CD4-positive, alpha-beta T cell (primary cell): ENCODE measurements at regions of chr17 and their contacts with region 1.

Region 1: GRCh38 chr17:16438557-16439302 is 23.4 kb downstream of the TRPV2 start:
- DNase-seq: peak; percentile 86 to 99 (median 92)
- ATAC-seq: peak; percentile 81
- H3K4me3 ChIP-seq: peak overlapping the region; percentile 96
- H3K4me3 Mint-ChIP-seq: peak overlapping the region; percentile 100
- H3K27ac ChIP-seq: peak overlapping the region; percentile 81 to 91
- H3K27ac Mint-ChIP-seq: peak overlapping the region; percentile 96
- H3K4me1 ChIP-seq: peaks cover 55% of the 10 kb centered on the region
- H3K4me1 Mint-ChIP-seq: peaks cover 56% of the 10 kb centered on the region
- H3K27me3 ChIP-seq: no peaks in the 10 kb centered on the region
- H3K27me3 Mint-ChIP-seq: no peaks in the 10 kb centered on the region
- CTCF ChIP-seq: no peak

Region 2: GRCh38 chr17:16215273-16215964 is 223.3 kb before region 1 on chr17 and contains the start of gene NCOR1:
- CTCF ChIA-PET with region 1: no interaction called
- POLR2A ChIA-PET with region 1: interaction called, 3 read pairs
- intact Hi-C with region 1: loop called in 1 of 2 experiments (anchors 5 kb)
- DNase-seq: peak; percentile 79 to 95 (median 87)
- ATAC-seq: peak; percentile 87
- H3K4me3 ChIP-seq: peak within 1 kb of the TSS; percentile 73
- H3K4me3 Mint-ChIP-seq: peak within 1 kb of the TSS; percentile 100
- H3K27ac ChIP-seq: peak within 1 kb of the TSS; percentile 72 to 79
- H3K27ac Mint-ChIP-seq: peak within 1 kb of the TSS; percentile 99
- H3K4me1 ChIP-seq: peaks cover 36% of the 10 kb centered on the region
- H3K4me1 Mint-ChIP-seq: peaks cover 58% of the 10 kb centered on the region
- H3K27me3 ChIP-seq: no peaks in the 10 kb centered on the region
- H3K27me3 Mint-ChIP-seq: no peaks in the 10 kb centered on the region
- CTCF ChIP-seq: no peak
- total RNA-seq, gene NCOR1: 118 TPM

Region 3: DNA sequence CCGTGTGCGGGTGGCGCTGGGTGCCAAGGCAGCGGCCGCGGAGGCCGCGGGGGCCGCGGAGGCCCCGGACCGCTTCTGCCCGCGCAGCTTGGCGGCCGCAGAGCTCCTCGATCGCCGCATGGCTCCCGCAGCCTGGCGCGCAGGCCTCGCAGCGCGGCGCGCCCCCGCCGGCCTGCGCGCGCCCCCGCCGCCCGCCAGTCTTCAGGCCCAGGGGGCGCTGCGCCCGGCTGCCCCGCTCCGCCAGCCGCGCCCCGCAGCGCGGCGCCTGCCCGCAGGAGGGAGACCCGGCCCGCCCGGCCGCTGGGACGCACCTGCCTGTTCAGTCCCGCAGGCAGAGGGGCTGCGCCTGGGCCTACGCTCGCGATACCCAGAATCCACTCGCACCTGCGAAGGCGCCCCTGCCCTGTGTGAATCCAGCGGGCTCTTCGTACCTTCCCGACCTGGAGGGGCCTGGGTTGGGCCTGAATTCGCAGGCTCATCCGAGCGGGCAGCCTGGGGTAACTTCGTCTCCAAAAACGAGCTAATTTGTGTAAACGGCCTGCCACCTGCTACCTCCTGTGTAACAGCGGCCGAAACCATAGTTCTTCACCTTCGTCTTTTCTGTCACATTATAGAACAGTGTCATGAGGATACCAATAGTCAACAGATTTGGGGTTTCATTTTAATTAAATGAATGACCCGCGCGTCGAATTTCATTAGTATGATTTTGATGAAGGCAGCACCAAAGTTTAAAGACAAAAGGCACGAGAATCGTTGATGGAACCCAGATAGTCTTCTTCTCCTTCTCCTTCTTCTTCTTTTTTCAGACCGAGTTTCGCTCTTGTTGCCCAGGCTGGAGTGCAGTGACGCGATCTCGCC is 85.2 kb before region 1 on chr17 and contains the start of gene CENPV:
- CTCF ChIA-PET with region 1: no interaction called
- POLR2A ChIA-PET with region 1: interaction called, 10 read pairs
- intact Hi-C with region 1: no loop called
- DNase-seq: peak; percentile 37 to 88 (median 60)
- ATAC-seq: peak; percentile 85
- H3K4me3 ChIP-seq: peak within 1 kb of the TSS; percentile 73
- H3K4me3 Mint-ChIP-seq: peak within 1 kb of the TSS; percentile 97
- H3K27ac ChIP-seq: peak within 1 kb of the TSS in 1 of 2 donors; percentile 30
- H3K27ac Mint-ChIP-seq: peak within 1 kb of the TSS; percentile 72
- H3K4me1 ChIP-seq: peaks cover 19% of the 10 kb centered on the region
- H3K4me1 Mint-ChIP-seq: peaks cover 17% of the 10 kb centered on the region
- H3K27me3 ChIP-seq: no peaks in the 10 kb centered on the region
- H3K27me3 Mint-ChIP-seq: no peaks in the 10 kb centered on the region
- CTCF ChIP-seq: no peak
- total RNA-seq, gene CENPV: 18.5 to 19.4 TPM

Region 4: GRCh38 chr17:16380640-16381495 is 57.9 kb before region 1 on chr17 and contains the start of gene UBB:
- CTCF ChIA-PET with region 1: interaction called, 3 read pairs
- POLR2A ChIA-PET with region 1: interaction called, 51 read pairs
- intact Hi-C with region 1: loop called (anchors 1 to 2 kb)
- DNase-seq: peak; percentile 89 to 99 (median 92)
- ATAC-seq: peak; percentile 95
- H3K4me3 ChIP-seq: peak within 1 kb of the TSS; percentile 87
- H3K4me3 Mint-ChIP-seq: peak within 1 kb of the TSS; percentile 91
- H3K27ac ChIP-seq: peak within 1 kb of the TSS; percentile 94 to 100
- H3K27ac Mint-ChIP-seq: peak within 1 kb of the TSS; percentile 97
- H3K4me1 ChIP-seq: peaks cover 33% of the 10 kb centered on the region
- H3K4me1 Mint-ChIP-seq: peaks cover 46% of the 10 kb centered on the region
- H3K27me3 ChIP-seq: no peaks in the 10 kb centered on the region
- H3K27me3 Mint-ChIP-seq: peaks cover 4% of the 10 kb centered on the region
- CTCF ChIP-seq: no peak
- total RNA-seq, gene UBB: 646 to 647 TPM

Region 5: GRCh38 chr17:16428098-16428882 is 10.4 kb before region 1 on chr17:
- CTCF ChIA-PET with region 1: interaction called, 5 read pairs
- POLR2A ChIA-PET with region 1: interaction called, 17 read pairs
- intact Hi-C with region 1: no loop called
- DNase-seq: peak in 11 of 14 experiments; percentile 17 to 66 (median 42)
- ATAC-seq: peak; percentile 84
- H3K4me3 ChIP-seq: no peak overlapping the region
- H3K4me3 Mint-ChIP-seq: no peak overlapping the region
- H3K27ac ChIP-seq: no peak overlapping the region
- H3K27ac Mint-ChIP-seq: no peak overlapping the region
- H3K4me1 ChIP-seq: peaks cover 9% of the 10 kb centered on the region
- H3K4me1 Mint-ChIP-seq: no peaks in the 10 kb centered on the region
- H3K27me3 ChIP-seq: no peaks in the 10 kb centered on the region
- H3K27me3 Mint-ChIP-seq: no peaks in the 10 kb centered on the region
- CTCF ChIP-seq: peak; percentile 46

Region 6: DNA sequence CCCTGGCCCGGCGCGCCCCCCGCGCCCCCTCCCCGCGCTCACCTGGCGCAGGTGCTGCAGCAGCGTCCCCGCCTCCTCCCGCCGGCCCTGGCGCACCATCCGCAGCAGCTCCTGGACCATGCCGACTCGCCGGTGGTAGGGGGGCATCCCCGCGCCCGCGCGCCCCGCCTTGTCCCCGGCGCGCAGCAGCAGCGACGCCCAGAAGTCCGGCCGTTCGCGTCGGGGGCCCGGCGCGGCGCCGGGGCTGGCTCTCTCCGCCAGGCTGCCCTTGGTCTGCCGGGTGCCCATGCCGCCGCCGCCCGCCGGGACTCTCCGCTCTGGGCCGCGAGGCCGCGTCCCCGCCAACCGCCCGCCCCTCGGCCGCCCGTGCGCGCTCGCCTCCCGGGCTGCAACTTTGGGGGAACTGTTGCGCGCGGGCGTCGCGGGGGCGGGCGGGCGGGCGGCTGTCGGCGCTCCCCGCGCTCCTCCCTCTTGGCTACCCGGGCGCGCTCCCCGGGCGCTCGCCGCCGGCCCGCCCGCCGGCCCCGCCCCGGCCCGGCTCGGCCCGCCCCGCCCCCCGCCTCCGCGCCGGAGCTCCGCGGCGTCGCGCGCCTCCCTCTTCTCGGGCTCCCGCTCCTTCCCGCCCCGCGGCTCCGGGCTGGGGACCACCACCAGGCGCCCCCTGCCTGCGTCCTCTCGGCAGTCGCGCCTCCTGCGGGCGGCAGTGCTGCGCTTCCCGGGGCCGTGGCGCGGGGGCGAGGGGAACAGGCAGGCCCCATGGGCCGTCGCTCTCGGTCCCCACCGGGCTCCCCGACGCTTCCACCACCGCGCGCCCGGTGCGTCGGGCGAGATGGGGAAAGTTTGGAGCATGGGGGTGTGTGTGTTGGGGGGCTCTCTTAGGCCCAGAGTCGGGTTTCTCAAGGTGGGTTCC is 53.2 kb after region 1 on chr17 and contains the start of gene LRRC75A:
- CTCF ChIA-PET with region 1: no interaction called
- POLR2A ChIA-PET with region 1: interaction called, 3 read pairs
- intact Hi-C with region 1: loop called in 1 of 2 experiments (anchors 5 kb)
- DNase-seq: peak; percentile 17 to 83 (median 49)
- ATAC-seq: peak; percentile 87
- H3K4me3 ChIP-seq: peak within 1 kb of the TSS; percentile 51
- H3K4me3 Mint-ChIP-seq: peak within 1 kb of the TSS; percentile 89
- H3K27ac ChIP-seq: no peak within 1 kb of the TSS
- H3K27ac Mint-ChIP-seq: no peak within 1 kb of the TSS
- H3K4me1 ChIP-seq: peaks cover 17% of the 10 kb centered on the region
- H3K4me1 Mint-ChIP-seq: peaks cover 12% of the 10 kb centered on the region
- H3K27me3 ChIP-seq: peaks cover 0 to 5% of the 10 kb centered on the region in 2 experiments
- H3K27me3 Mint-ChIP-seq: no peaks in the 10 kb centered on the region
- CTCF ChIP-seq: no peak
- total RNA-seq, gene LRRC75A: 1.5 to 1.9 TPM

Region 7: DNA sequence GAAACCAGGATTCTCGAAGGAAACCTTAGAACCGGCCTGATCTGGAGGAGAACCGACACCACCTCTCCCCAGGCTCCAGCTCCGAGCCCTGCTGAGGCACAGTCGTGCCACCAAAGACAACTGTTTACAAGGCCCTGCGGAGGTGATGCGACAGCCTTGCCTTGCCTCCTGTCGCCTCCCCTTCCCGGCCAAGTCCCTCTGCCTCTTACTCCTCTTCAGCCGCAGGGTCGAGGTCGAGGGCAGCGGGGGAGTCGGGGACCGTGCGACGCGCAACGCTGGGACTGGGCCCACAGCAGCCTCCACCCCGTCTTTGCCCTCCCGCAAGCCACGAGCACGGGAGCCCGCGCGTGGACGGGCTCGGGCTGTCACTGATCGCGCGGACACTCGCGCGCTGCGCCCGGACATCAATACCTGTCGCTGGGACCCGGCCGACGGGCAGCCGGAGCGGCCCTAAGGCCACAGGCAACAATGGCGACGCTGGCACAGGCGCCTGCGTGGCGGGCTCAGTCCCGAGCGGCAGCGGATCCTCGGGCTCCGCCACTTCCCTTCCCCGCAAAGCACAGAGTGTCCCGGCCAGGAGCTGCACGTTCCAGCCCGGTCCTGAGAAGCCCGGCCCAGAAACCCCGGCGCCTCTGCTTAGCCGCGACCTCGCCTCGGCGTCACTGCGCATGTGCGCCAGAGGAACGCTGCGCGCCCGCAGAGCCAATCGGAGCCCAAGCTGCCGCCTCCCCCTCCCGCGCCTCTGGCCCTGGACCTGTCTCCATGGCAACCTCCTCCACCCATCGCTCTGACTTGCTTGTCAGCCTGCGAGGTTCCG is 130.0 kb after region 1 on chr17 and contains the start of gene ZNF287:
- CTCF ChIA-PET with region 1: no interaction called
- POLR2A ChIA-PET with region 1: interaction called, 3 read pairs
- intact Hi-C with region 1: loop called in 1 of 2 experiments (anchors 1 kb)
- DNase-seq: peak; percentile 87 to 98 (median 92)
- ATAC-seq: peak; percentile 98
- H3K4me3 ChIP-seq: peak within 1 kb of the TSS; percentile 63
- H3K4me3 Mint-ChIP-seq: peak within 1 kb of the TSS; percentile 87
- H3K27ac ChIP-seq: peak within 1 kb of the TSS in 1 of 2 donors; percentile 29
- H3K27ac Mint-ChIP-seq: peak within 1 kb of the TSS; percentile 70
- H3K4me1 ChIP-seq: peaks cover 18% of the 10 kb centered on the region
- H3K4me1 Mint-ChIP-seq: peaks cover 13% of the 10 kb centered on the region
- H3K27me3 ChIP-seq: no peaks in the 10 kb centered on the region
- H3K27me3 Mint-ChIP-seq: peaks cover 4% of the 10 kb centered on the region
- CTCF ChIP-seq: no peak
- total RNA-seq, gene ZNF287: 6.9 to 7.8 TPM